MCF 10A (cell line): ENCODE measurements at regions of chr14 and their contacts with region 1.

Region 1: DNA sequence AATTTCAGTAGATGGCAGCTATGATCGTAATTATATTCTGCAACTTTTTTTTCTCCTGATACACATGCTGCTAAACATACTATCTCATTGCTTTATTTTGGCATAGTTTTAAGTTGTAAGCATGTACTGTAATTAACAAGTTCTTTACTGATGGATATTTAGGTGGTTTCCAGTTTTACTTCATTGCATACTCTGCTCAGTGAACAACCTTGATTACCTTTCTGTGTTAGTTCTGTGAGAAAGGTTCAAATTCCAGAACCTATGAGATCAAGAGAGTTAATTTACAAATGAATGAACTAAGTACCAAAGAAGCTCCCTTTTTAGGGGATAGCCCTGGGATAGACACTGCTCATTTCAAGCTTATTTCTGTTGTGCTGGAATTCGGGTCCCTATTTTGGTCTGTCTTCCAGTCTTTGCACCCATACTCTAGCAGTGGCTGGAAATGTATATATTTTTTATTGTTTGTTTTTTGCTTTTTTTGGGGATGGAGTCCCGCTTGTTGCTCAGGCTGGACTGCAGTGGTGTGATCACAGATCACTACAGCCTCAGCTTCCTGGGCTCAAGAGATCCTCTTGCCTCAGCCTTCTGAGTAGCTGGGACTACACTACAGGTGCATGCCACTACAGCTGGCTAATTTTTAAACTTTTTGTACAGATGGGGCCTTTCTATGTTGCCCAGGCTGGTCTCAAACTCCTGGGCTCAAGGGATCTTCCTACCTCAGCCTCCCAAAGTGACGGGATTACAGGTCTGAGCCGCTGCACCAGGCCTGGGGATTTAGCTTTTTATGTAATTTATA is 10.6 kb downstream of the PAPOLA start:
- DNase-seq: no peak
- H3K4me3 Mint-ChIP-seq: no peak overlapping the region
- H3K27ac Mint-ChIP-seq: no peak overlapping the region
- H3K4me1 Mint-ChIP-seq: peaks cover 18% of the 10 kb centered on the region
- H3K27me3 Mint-ChIP-seq: no peaks in the 10 kb centered on the region
- CTCF ChIP-seq: no peak

Region 2: GRCh38 chr14:96489327-96489726 is 23.5 kb before region 1 on chr14:
- CTCF ChIA-PET with region 1: no interaction called
- POLR2A ChIA-PET with region 1: no interaction called
- intact Hi-C with region 1: no loop called
- DNase-seq: no peak
- H3K4me3 Mint-ChIP-seq: no peak overlapping the region
- H3K27ac Mint-ChIP-seq: no peak overlapping the region
- H3K4me1 Mint-ChIP-seq: no peaks in the 10 kb centered on the region
- H3K27me3 Mint-ChIP-seq: no peaks in the 10 kb centered on the region
- CTCF ChIP-seq: no peak

Region 3: DNA sequence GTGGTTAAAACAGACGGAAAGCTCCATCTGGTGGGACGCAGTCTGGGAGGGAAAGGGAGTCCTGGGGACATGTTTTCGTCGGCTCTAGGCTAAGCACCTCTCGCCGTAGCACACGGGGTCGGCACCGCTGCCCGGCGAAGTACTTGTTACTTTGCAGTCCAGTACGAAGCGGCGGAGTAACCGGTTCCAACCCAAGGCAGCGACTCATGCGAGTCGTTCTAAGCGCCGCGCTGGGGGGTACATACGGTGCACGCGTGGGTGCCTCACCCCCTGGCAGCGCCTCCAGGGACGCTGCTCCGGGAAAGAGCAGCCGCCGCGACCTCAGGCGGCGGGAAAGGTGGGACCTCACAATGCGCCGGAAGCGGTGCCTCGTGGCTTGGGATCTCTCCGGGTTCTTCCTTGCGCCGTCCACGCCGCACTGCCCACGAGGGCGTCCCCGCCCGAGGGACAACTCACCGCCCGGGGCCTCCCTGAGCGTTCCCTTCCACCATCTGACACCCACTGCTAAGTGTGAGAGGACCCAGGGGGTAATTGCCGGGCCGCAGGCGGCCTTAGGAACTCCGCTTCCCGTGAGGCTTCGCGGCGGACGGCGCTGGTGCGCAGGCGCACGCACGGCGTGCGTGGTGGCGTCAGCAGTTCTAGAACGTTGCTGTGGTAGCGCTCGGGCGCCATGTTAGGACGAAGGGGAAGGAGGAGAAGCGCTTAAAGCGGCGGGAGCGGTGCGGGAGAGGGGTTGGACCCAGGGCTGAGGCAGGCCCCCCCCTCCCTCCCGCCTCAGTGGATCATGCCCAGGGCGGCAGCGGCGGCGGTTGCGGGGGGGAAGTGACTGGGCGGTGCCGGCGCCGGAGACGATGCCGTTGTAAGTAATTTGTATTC is 10.8 kb before region 1 on chr14 and contains the start of gene PAPOLA:
- CTCF ChIA-PET with region 1: no interaction called
- POLR2A ChIA-PET with region 1: interaction called, 19 read pairs
- intact Hi-C with region 1: no loop called
- DNase-seq: peak; percentile 95
- H3K4me3 Mint-ChIP-seq: peak within 1 kb of the TSS; percentile 99
- H3K27ac Mint-ChIP-seq: peak within 1 kb of the TSS; percentile 97
- H3K4me1 Mint-ChIP-seq: peaks cover 27% of the 10 kb centered on the region
- H3K27me3 Mint-ChIP-seq: no peaks in the 10 kb centered on the region
- CTCF ChIP-seq: no peak
- total RNA-seq, gene PAPOLA: 194 TPM in 2 replicates

Region 4: GRCh38 chr14:96525452-96525851 is 12.7 kb after region 1 on chr14:
- CTCF ChIA-PET with region 1: no interaction called
- POLR2A ChIA-PET with region 1: no interaction called
- intact Hi-C with region 1: no loop called
- DNase-seq: no peak
- H3K4me3 Mint-ChIP-seq: no peak overlapping the region
- H3K27ac Mint-ChIP-seq: no peak overlapping the region
- H3K4me1 Mint-ChIP-seq: peaks cover 5% of the 10 kb centered on the region
- H3K27me3 Mint-ChIP-seq: no peaks in the 10 kb centered on the region
- CTCF ChIP-seq: no peak